Adrenal gland (tissue), 19 donors: ENCODE measurements at regions of chr18 and their contacts with region 1.

Region 1: GRCh38 chr18:27887287-27887686 is 289.6 kb downstream of the CDH2 start:
- DNase-seq: no peak
- H3K4me3 ChIP-seq: no peak overlapping the region
- H3K27ac ChIP-seq: no peak overlapping the region
- H3K4me1 ChIP-seq: no peaks in the 10 kb centered on the region
- H3K27me3 ChIP-seq: no peaks in the 10 kb centered on the region
- CTCF ChIP-seq: no peak
- POLR2A ChIP-seq: no peak

Region 2: DNA sequence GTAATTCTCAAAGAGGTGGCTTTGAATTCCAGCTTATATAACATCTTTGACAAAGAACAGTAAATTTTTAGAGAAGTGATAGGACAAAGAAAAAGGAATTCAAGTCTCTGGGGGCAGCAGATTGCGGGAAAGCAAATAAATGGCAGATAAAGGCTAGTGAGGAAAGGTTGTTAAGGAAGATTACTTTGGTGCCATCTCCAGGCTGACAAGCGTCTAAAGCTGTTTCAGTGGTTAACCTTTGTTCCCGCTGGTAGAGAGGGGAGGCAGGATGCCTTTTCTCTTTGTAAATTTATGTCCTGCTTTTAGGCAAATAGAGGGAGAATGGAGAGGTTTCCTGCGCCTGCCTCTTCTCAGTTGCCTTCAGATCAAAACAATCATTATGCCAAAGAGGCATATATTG is 271.0 kb before region 1 on chr18:
- intact Hi-C with region 1: no loop called
- DNase-seq: no peak
- H3K4me3 ChIP-seq: no peak overlapping the region
- H3K27ac ChIP-seq: no peak overlapping the region
- H3K4me1 ChIP-seq: no peaks in the 10 kb centered on the region
- H3K27me3 ChIP-seq: no peaks in the 10 kb centered on the region
- CTCF ChIP-seq: no peak
- POLR2A ChIP-seq: no peak

Region 3: DNA sequence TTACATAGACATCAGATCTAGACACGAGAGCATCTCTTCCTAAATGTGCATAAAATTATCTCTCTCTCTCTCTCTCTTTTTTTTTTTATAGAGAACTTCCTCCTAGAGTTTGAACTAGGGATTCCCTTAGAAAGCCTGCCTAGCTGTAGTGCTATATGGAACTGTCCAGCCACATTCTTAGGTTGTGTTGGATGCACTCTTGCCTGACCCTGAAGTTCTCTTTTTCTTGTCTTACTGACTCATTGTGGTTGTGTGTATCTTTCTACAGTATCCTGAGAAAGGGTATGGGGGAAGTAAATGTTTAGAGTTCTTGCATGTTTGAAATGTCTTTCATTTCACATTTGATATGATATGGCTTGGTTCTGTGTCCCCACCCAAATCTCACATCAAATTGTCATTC is 78.6 kb before region 1 on chr18:
- intact Hi-C with region 1: loop called in 1 of 2 experiments (anchors 10 kb)
- DNase-seq: no peak
- H3K4me3 ChIP-seq: no peak overlapping the region
- H3K27ac ChIP-seq: no peak overlapping the region
- H3K4me1 ChIP-seq: no peaks in the 10 kb centered on the region
- H3K27me3 ChIP-seq: no peaks in the 10 kb centered on the region
- CTCF ChIP-seq: no peak
- POLR2A ChIP-seq: no peak